ENCODE measurements at regions of chr13 and their contacts with region 1.

Region 1: DNA sequence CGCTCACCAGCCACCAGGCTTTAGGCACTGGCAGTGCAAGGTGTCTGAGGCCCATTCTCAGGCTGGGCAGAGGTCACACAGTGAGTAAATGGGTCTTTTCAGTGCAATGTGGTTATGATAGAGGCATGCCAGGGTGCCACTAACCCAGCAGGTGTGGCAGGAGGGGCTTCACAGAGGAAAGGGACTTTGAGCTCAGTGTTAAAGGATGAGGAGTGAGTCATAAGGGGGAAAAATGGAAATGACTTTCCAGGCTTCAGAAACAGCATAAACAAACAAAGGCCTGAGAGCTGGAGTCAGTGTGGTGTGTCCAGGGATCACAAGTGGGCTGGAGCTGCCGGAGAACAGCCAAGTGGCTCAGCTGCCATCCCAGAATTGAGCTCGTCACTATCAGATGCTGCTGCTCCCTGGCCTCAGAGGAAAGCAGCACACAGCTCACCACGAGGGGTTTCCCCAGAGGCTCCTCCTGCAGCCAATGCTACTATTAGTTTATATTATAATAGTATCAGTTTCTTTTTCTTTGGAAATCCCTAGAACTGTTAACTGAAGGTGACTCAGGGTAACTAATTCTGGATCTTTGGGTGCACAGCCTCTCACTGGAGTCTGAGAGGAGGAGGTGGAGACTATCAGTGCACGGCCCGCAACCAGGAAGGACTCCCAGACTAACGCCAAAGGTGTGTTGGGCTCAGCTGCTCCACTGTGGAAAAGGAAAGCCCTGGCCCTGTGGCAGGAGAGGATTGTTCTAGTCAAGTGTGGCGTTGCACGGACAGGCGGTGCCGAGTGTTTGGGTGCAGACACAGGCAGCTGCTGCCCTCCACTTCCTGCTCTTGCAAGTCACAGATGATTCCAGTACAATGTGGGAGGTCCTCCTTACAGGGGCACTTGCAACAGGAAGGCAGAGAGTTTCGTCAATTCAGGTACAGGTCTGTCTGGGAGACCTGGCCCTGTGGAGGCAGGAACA is 39.5 kb downstream of the DHRS12 start:
- DNase-seq: peak; percentile 58
- ATAC-seq: peak; percentile 84
- H3K4me3 Mint-ChIP-seq: peak overlapping the region; percentile 79
- H3K27ac Mint-ChIP-seq: peak overlapping the region; percentile 94
- H3K4me1 Mint-ChIP-seq: peaks cover 15% of the 10 kb centered on the region
- H3K27me3 Mint-ChIP-seq: no peaks in the 10 kb centered on the region

Region 2: DNA sequence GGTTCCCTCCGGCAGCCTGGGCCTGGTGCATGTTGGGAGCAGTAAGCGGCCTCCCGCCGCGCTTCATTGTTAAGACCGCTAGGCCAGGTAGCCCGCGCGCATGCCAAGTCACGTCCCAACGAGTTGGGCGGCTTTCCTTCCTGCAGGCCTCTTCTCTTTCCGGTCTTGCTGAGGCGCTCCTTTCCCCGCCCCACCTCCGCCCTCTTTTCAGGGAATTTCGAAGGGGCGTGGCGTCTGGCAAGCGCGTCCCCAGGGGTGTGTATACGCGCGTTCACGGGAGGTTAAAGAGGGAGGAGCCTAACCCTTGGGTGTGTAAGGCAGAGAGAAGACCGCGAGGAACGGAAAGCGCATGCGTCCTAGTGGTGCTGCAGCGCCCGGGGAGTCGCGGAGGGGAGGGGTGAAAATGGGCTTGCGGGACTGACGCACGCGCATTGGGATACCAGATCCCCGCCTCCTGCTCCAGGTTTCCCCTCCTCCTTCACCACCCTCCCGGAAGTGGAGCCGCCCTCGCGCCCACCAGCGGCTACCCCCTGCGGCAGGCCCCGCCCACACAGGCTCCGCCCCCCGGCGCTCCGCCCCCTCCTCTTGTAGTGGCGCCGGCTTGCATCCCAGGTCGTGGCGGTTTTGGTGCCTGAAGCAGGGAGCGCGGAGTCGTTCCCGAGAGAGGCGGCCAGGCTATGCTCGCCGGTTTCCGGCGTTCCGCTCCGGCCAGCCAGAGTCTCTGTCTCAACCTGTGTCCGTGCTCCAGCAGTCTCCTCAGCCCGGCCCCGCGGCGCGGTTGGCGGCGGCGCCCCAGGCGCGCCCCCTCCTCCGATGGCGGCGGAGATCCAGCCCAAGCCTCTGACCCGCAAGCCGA is 180.4 kb before region 1 on chr13 and contains the start of gene WDFY2:
- POLR2A ChIA-PET with region 1: interaction called, 11 read pairs
- DNase-seq: peak; percentile 100
- ATAC-seq: peak; percentile 84
- H3K4me3 Mint-ChIP-seq: peak within 1 kb of the TSS; percentile 93
- H3K27ac Mint-ChIP-seq: peak within 1 kb of the TSS; percentile 96
- H3K4me1 Mint-ChIP-seq: peaks cover 16% of the 10 kb centered on the region
- H3K27me3 Mint-ChIP-seq: peaks cover under 1% of the 10 kb centered on the region
- total RNA-seq, gene WDFY2: 12.7 to 15.5 TPM